Naive thymus-derived CD4-positive, alpha-beta T cell (primary cell): ENCODE measurements at regions of chr2 and their contacts with region 1.

Region 1: DNA sequence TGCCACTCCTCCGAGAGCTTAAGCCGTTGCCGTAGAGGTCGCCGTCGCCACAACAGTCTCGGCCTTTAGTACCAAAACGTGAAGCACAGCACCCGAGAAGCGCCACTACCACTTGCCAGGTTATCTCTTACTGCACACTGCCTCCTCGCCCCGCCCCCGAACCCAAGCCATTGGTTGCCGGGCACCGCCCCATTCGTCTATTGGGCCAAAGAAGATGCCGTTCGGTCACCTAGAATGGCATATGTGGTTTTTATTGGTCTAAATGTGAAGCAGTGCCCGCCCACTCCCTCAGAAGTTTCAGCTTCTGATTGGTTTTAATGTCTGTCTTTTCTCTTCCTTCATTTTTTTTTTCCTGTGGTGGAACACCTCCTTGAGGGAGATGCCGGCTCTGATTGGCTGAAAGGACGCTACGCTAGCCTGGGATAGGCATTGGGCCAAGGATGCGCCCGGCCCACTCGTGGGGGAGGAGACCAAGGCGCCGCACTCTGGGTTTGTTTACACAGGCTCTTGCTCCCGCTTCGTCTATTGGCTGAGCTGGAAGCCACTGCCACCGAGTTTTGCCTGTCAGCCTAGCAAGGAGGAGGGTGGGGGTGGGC is at the start of gene PAIP2B:
- DNase-seq: peak; percentile 88 to 99 (median 99)
- ATAC-seq: peak; percentile 95
- H3K4me3 ChIP-seq: peak within 1 kb of the TSS; percentile 80
- H3K4me3 Mint-ChIP-seq: peak within 1 kb of the TSS; percentile 92 to 99 (median 97)
- H3K27ac ChIP-seq: peak within 1 kb of the TSS; percentile 82
- H3K27ac Mint-ChIP-seq: peak within 1 kb of the TSS; percentile 84 to 98 (median 92)
- H3K4me1 ChIP-seq: peaks cover 8 to 11% of the 10 kb centered on the region in 2 donors
- H3K4me1 Mint-ChIP-seq: peaks cover 13 to 34% (median 22%) of the 10 kb centered on the region in 7 donors
- H3K27me3 ChIP-seq: no peaks in the 10 kb centered on the region
- H3K27me3 Mint-ChIP-seq: peaks cover 0 to 28% (median 6%) of the 10 kb centered on the region in 5 donors
- total RNA-seq, gene PAIP2B: 1.3 to 14.1 (median 5.0) TPM

Region 2: GRCh38 chr2:70248181-70248847 is 978.7 kb before region 1 on chr2 and contains the start of gene TIA1:
- CTCF ChIA-PET with region 1: no interaction called
- POLR2A ChIA-PET with region 1: no interaction called
- intact Hi-C with region 1: loop called in 1 of 2 experiments (anchors 1 kb)
- DNase-seq: peak; percentile 94 to 99 (median 98)
- ATAC-seq: peak; percentile 98
- H3K4me3 ChIP-seq: peak within 1 kb of the TSS; percentile 87
- H3K4me3 Mint-ChIP-seq: peak within 1 kb of the TSS; percentile 83 to 99 (median 95)
- H3K27ac ChIP-seq: peak within 1 kb of the TSS; percentile 95
- H3K27ac Mint-ChIP-seq: peak within 1 kb of the TSS; percentile 91 to 100 (median 97)
- H3K4me1 ChIP-seq: peaks cover 13 to 24% of the 10 kb centered on the region in 2 donors
- H3K4me1 Mint-ChIP-seq: peaks cover 23 to 48% (median 40%) of the 10 kb centered on the region in 7 donors
- H3K27me3 ChIP-seq: no peaks in the 10 kb centered on the region
- H3K27me3 Mint-ChIP-seq: peaks cover 0 to 4% (median 0%) of the 10 kb centered on the region in 5 donors
- total RNA-seq, gene TIA1: 80.9 to 244 (median 163) TPM

Region 3: DNA sequence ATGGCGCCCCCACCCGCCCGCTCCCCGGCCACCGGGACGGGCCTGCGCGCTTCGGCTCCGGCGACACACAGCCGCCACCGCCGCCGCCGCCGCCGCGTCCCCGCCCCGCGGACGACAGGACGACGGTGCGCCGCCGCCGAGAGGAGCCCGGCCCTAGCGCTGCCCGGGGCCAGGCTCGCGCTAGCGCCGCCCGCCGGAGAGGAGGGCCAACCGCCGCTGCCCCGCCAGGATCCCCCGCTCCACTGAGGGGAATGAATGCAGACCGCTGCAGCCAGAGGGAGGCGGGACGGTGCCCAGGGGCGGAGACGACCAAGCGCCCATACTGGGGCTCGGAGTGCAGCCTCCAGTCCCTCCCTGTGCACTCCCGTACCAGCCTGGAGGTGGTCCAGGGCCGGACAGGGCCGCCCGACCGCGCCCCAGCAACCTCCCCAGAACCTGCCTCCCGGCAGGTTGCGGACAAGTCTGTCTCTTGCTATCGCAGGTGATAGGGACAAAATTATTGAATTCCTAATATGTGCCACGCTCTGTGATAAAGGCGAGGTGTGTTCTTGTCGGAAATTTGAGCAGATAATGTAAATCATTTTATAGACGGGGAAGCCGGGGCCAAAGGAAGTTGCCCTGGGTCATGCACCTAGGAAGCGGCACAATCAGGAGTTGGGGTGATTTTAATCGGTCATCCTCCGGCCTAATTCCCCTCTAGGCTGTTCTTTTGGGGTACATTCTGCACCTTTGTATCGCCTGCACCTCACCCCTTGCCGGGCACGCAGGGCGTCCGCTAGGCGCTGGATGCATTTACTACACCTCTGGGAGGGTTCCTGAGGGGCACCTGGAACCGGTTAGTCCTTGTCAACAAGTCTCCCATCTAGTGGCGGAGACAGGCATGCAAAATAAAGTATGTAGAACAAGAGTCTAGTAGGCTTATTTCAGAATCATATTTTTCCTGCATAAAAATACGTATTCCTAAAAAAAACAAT is 232.0 kb before region 1 on chr2 and contains the start of gene TEX261:
- CTCF ChIA-PET with region 1: interaction called, 3 read pairs
- POLR2A ChIA-PET with region 1: no interaction called
- intact Hi-C with region 1: loop called (anchors 1 to 5 kb)
- DNase-seq: peak; percentile 81 to 97 (median 88)
- ATAC-seq: peak; percentile 98
- H3K4me3 ChIP-seq: peak within 1 kb of the TSS; percentile 92
- H3K4me3 Mint-ChIP-seq: peak within 1 kb of the TSS; percentile 95 to 100 (median 98)
- H3K27ac ChIP-seq: peak within 1 kb of the TSS; percentile 88
- H3K27ac Mint-ChIP-seq: peak within 1 kb of the TSS; percentile 88 to 99 (median 96)
- H3K4me1 ChIP-seq: peaks cover 19 to 21% of the 10 kb centered on the region in 2 donors
- H3K4me1 Mint-ChIP-seq: peaks cover 23 to 44% (median 36%) of the 10 kb centered on the region in 7 donors
- H3K27me3 ChIP-seq: no peaks in the 10 kb centered on the region
- H3K27me3 Mint-ChIP-seq: no peaks in the 10 kb centered on the region
- total RNA-seq, gene TEX261: 33.2 to 66.3 (median 56.4) TPM

Region 4: DNA sequence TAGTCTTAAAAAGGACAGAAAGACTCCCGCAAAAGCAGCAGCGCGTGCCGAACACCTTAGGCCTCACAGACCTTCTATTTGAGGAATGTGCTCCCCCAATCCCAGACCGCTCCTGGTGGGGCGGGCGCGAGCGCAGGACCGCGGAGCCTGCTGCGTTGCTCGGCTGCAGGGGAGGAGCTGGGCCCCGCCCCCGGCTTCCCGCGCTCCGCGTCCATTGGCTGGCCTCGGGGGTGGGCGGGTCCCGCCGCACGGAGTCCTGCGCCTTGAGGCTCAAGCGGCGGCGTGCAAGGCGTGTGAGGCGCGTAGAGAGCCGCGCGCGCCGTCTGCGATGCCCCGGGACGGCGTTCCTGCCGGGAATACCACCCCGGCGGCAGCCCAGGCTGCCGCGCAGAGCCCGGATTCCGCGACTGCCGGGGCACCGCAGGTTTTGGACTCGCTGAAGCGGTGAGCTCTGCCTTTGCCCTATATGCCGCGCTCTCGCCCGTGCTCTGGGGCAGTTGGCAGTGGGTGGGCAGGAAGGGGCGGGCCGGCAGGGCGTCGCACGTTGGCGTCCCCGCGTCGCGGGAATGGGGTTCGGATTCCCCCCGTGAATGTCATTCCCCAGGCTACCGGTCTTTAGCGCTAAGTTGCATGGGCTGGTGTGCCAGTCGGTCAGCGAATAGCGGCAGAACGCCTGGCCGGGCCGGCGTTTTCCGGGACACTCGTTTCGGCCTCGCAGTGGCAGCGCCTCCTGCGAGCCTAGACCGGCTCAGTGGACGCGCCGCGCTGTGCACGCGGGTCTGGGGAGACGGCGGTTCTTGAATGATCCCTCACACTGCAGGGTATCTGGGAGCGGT is 49.5 kb after region 1 on chr2:
- CTCF ChIA-PET with region 1: no interaction called
- POLR2A ChIA-PET with region 1: no interaction called
- intact Hi-C with region 1: loop called (anchors 1 kb)
- DNase-seq: peak; percentile 70 to 92 (median 84)
- ATAC-seq: peak; percentile 100
- H3K4me3 ChIP-seq: peak overlapping the region; percentile 67
- H3K4me3 Mint-ChIP-seq: peak overlapping the region; percentile 39 to 85 (median 76)
- H3K27ac ChIP-seq: no peak overlapping the region
- H3K27ac Mint-ChIP-seq: no peak overlapping the region
- H3K4me1 ChIP-seq: peaks cover 4 to 16% of the 10 kb centered on the region in 2 donors
- H3K4me1 Mint-ChIP-seq: peaks cover 10 to 18% (median 13%) of the 10 kb centered on the region in 7 donors
- H3K27me3 ChIP-seq: peaks cover 11 to 15% of the 10 kb centered on the region in 2 donors
- H3K27me3 Mint-ChIP-seq: peaks cover 78 to 89% (median 86%) of the 10 kb centered on the region in 5 donors

Region 5: GRCh38 chr2:71340176-71340575 is 113.1 kb after region 1 on chr2:
- CTCF ChIA-PET with region 1: no interaction called
- POLR2A ChIA-PET with region 1: no interaction called
- intact Hi-C with region 1: no loop called
- DNase-seq: no peak
- ATAC-seq: no peak
- H3K4me3 ChIP-seq: no peak overlapping the region
- H3K4me3 Mint-ChIP-seq: peak overlapping the region in 5 of 10 donors; percentile 10 to 38 (median 23)
- H3K27ac ChIP-seq: no peak overlapping the region
- H3K27ac Mint-ChIP-seq: peak overlapping the region in 1 of 9 donors; percentile 28
- H3K4me1 ChIP-seq: peaks cover 20 to 21% of the 10 kb centered on the region in 2 donors
- H3K4me1 Mint-ChIP-seq: peaks cover 22 to 92% (median 76%) of the 10 kb centered on the region in 7 donors
- H3K27me3 ChIP-seq: no peaks in the 10 kb centered on the region
- H3K27me3 Mint-ChIP-seq: no peaks in the 10 kb centered on the region

Region 6: GRCh38 chr2:71423817-71424420 is 196.9 kb after region 1 on chr2:
- CTCF ChIA-PET with region 1: no interaction called
- POLR2A ChIA-PET with region 1: no interaction called
- intact Hi-C with region 1: loop called in 1 of 2 experiments (anchors 5 kb)
- DNase-seq: no peak
- ATAC-seq: no peak
- H3K4me3 ChIP-seq: no peak overlapping the region
- H3K4me3 Mint-ChIP-seq: no peak overlapping the region
- H3K27ac ChIP-seq: no peak overlapping the region
- H3K27ac Mint-ChIP-seq: peak overlapping the region in 2 of 9 donors; percentile 5 to 18
- H3K4me1 ChIP-seq: no peaks in the 10 kb centered on the region
- H3K4me1 Mint-ChIP-seq: peaks cover 4 to 29% (median 20%) of the 10 kb centered on the region in 7 donors
- H3K27me3 ChIP-seq: no peaks in the 10 kb centered on the region
- H3K27me3 Mint-ChIP-seq: no peaks in the 10 kb centered on the region

Region 7: DNA sequence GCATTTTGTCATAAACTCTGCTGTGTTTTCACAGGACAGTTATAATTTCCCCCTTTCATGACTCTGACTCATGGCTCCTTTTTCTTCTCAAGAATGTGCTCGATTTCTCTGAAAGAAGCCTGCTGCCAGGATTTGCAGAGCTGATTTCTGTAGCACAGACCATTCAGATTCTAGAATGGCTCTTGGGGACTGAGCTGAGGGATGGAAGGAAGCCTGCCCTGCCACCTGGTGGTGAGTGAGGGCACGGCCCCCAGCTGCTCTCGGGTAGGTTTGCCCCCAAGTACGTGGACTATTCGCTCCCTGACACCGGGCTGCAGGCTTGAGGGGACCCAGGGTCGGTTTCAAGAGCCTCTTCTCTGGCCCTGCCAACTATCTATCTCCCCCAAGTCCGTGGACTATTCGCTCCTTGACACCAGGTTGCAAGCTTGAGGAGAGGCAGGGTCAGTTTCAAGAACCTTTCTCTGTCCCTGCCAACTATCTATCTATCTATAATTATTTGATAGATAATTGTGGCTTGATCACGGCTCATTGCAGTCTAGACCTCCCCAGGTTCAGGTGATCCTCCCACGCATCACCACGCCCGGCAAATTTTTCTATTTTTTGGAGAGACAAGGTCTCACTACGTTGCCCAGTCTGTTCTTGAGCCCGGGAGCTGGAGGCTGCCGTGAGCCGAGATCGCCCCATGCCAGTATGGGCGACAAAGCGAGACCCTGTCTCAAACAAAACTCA is 1985.5 kb after region 1 on chr2:
- CTCF ChIA-PET with region 1: no interaction called
- POLR2A ChIA-PET with region 1: no interaction called
- intact Hi-C with region 1: loop called in 1 of 2 experiments (anchors 1 kb)
- DNase-seq: peak; percentile 48 to 71 (median 64)
- ATAC-seq: peak; percentile 76
- H3K4me3 ChIP-seq: no peak overlapping the region
- H3K4me3 Mint-ChIP-seq: peak overlapping the region in 8 of 10 donors; percentile 15 to 97 (median 62)
- H3K27ac ChIP-seq: no peak overlapping the region
- H3K27ac Mint-ChIP-seq: peak overlapping the region in 6 of 9 donors; percentile 40 to 98 (median 91)
- H3K4me1 ChIP-seq: peaks cover 14 to 18% of the 10 kb centered on the region in 2 donors
- H3K4me1 Mint-ChIP-seq: peaks cover 16 to 44% (median 36%) of the 10 kb centered on the region in 7 donors
- H3K27me3 ChIP-seq: no peaks in the 10 kb centered on the region
- H3K27me3 Mint-ChIP-seq: peaks cover 4 to 8% (median 7%) of the 10 kb centered on the region in 5 donors